ENCODE measurements at regions of chr9 and their contacts with region 1.

Region 1: GRCh38 chr9:28389411-28389810 is 816.1 kb upstream of the C9orf72 start:
- DNase-seq: no peak
- H3K4me3 ChIP-seq: no peak overlapping the region
- H3K27ac ChIP-seq: no peak overlapping the region
- H3K4me1 ChIP-seq: no peaks in the 10 kb centered on the region
- H3K27me3 ChIP-seq: no peaks in the 10 kb centered on the region
- CTCF ChIP-seq: no peak

Region 2: GRCh38 chr9:28207657-28208056 is 181.8 kb before region 1 on chr9:
- CTCF ChIA-PET with region 1: interaction called, 10 read pairs
- dilution Hi-C with region 1: no loop called
- in situ Hi-C with region 1: no loop called
- intact Hi-C with region 1: no loop called
- DNase-seq: no peak
- H3K4me3 ChIP-seq: no peak overlapping the region
- H3K27ac ChIP-seq: no peak overlapping the region
- H3K4me1 ChIP-seq: peaks cover 2% of the 10 kb centered on the region
- H3K27me3 ChIP-seq: no peaks in the 10 kb centered on the region
- CTCF ChIP-seq: no peak

Region 3: GRCh38 chr9:28464481-28465216 is 75.2 kb after region 1 on chr9:
- CTCF ChIA-PET with region 1: no interaction called
- dilution Hi-C with region 1: no loop called
- in situ Hi-C with region 1: no loop called
- intact Hi-C with region 1: no loop called
- DNase-seq: no peak
- H3K4me3 ChIP-seq: no peak overlapping the region
- H3K27ac ChIP-seq: no peak overlapping the region
- H3K4me1 ChIP-seq: no peaks in the 10 kb centered on the region
- H3K27me3 ChIP-seq: no peaks in the 10 kb centered on the region
- CTCF ChIP-seq: no peak